K562 (cell line): ENCODE measurements at regions of chr1 and their contacts with region 1.

Region 1: DNA sequence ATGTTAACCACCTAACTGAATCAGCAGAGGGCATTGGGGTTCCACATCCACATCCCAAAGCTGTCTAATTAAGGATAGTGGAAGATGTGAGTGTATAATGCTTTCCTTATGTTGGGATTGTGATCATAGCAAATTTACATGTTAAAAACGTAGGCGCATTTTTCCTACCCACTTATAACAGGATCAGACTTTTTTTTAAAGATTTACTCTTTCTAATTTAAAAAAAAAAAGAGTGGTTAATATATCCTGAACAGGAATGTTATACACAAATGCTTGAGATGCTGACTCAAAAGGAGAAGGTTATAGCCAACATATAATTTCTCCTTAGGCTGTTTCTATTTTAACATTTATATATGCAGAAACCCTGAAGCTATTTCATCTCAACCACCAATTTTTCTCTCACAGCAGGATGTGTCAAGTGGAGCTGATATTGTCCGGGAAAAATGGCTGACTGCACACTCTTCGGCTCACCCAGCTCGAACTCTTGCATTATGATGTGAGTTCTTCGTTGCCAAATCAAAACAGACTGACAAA is 40.3 kb downstream of the RGS5 start:
- DNase-seq: no peak
- ATAC-seq: no peak
- H3K4me3 ChIP-seq: no peak overlapping the region
- H3K27ac ChIP-seq: no peak overlapping the region
- H3K4me1 ChIP-seq: no peaks in the 10 kb centered on the region
- H3K27me3 ChIP-seq: no peaks in the 10 kb centered on the region
- CTCF ChIP-seq: no peak
- EP300 ChIP-seq: no peak
- POLR2A ChIP-seq: no peak
- RAD21 ChIP-seq: no peak

Region 2: GRCh38 chr1:163144418-163144817 is 18.0 kb before region 1 on chr1:
- CTCF ChIA-PET with region 1: no interaction called
- POLR2A ChIA-PET with region 1: interaction called, 3 read pairs
- in situ Hi-C with region 1: no loop called
- intact Hi-C with region 1: loop called (anchors 1 kb)
- DNase-seq: no peak
- ATAC-seq: no peak
- H3K4me3 ChIP-seq: no peak overlapping the region
- H3K27ac ChIP-seq: no peak overlapping the region
- H3K4me1 ChIP-seq: no peaks in the 10 kb centered on the region
- H3K27me3 ChIP-seq: no peaks in the 10 kb centered on the region
- CTCF ChIP-seq: no peak
- EP300 ChIP-seq: no peak
- POLR2A ChIP-seq: no peak
- RAD21 ChIP-seq: no peak

Region 3: DNA sequence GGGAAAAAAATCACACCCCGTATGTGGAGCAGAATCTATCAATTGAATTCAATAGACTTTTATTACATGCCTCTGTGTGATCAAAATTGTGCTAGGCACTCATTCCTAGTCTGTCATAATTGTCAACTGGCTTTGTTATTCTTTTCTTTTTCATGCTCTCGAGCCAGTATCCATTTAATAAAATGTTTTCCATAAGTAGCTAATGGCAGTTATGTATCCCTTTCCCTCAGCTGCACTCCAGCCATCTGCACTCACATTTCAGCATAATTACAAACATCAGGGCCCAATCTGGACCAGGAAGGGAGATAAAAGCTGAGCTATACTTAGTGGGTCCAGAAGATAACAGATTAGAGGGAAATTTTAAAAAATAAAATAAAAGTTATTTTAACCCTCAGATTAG is 24.4 kb after region 1 on chr1:
- CTCF ChIA-PET with region 1: no interaction called
- POLR2A ChIA-PET with region 1: no interaction called
- in situ Hi-C with region 1: no loop called
- intact Hi-C with region 1: no loop called
- DNase-seq: no peak
- ATAC-seq: no peak
- H3K4me3 ChIP-seq: no peak overlapping the region
- H3K27ac ChIP-seq: no peak overlapping the region
- H3K4me1 ChIP-seq: no peaks in the 10 kb centered on the region
- H3K27me3 ChIP-seq: no peaks in the 10 kb centered on the region
- CTCF ChIP-seq: no peak
- EP300 ChIP-seq: no peak
- POLR2A ChIP-seq: no peak
- RAD21 ChIP-seq: no peak